ENCODE measurements at regions of chrX and their contacts with region 1.

Region 1: GRCh38 chrX:115679460-115679859 is 118.5 kb downstream of the PLS3 start:
- DNase-seq: no peak
- H3K4me3 ChIP-seq: no peak overlapping the region
- H3K27ac ChIP-seq: no peak overlapping the region
- H3K27me3 ChIP-seq: no peaks in the 10 kb centered on the region
- CTCF ChIP-seq: peak; percentile 55

Region 2: DNA sequence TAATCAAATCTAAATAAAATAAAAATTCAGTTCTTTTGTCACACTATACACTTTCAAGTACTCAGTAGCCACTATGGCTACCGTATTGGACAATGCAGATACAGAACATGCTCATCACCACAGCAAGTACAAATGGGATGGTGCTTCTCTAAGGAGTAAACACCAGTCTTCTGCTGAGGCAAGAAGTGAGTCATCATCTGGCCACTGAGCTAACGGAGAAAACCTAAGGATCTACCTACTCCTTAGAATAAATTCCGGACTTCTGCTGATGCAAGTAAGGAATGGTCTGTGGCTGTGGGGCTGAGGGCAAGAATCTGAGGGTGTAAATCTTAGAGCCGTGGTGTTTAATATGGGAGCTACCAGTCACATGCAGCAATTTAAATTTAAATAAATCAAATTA is 501.5 kb before region 1 on chrX:
- CTCF ChIA-PET with region 1: interaction called, 16 read pairs
- POLR2A ChIA-PET with region 1: no interaction called
- DNase-seq: peak; percentile 2
- H3K4me3 ChIP-seq: no peak overlapping the region
- H3K27ac ChIP-seq: no peak overlapping the region
- H3K27me3 ChIP-seq: no peaks in the 10 kb centered on the region
- CTCF ChIP-seq: no peak

Region 3: GRCh38 chrX:115330498-115331168 is 348.8 kb before region 1 on chrX:
- CTCF ChIA-PET with region 1: interaction called, 13 read pairs
- POLR2A ChIA-PET with region 1: no interaction called
- DNase-seq: no peak
- H3K4me3 ChIP-seq: peak overlapping the region; percentile 39
- H3K27ac ChIP-seq: no peak overlapping the region
- H3K27me3 ChIP-seq: no peaks in the 10 kb centered on the region
- CTCF ChIP-seq: peak; percentile 68

Region 4: DNA sequence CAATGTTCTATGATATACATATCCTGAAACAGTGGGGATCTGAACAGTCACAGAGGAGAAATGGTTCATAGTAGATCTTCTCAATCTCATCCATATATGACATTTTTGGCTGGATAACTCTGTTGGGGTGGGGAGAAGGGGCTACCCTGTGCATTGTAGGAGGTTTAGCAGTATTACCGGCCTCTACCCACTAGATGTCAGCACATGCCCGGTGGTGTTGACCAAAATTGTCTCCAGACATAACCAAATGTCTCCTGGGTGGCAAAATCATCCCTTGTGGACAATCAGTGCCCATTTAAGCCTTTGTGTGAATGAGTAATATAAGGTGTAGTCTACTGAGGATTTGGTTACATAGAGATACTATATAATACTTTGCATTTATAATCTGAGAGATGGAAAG is 28.5 kb before region 1 on chrX:
- CTCF ChIA-PET with region 1: interaction called, 14 read pairs
- POLR2A ChIA-PET with region 1: no interaction called
- DNase-seq: no peak
- H3K4me3 ChIP-seq: no peak overlapping the region
- H3K27ac ChIP-seq: no peak overlapping the region
- H3K27me3 ChIP-seq: no peaks in the 10 kb centered on the region
- CTCF ChIP-seq: peak; percentile 60

Region 5: GRCh38 chrX:115690511-115691216 is 11.2 kb after region 1 on chrX:
- CTCF ChIA-PET with region 1: interaction called, 30 read pairs
- POLR2A ChIA-PET with region 1: no interaction called
- DNase-seq: peak; percentile 51
- H3K4me3 ChIP-seq: no peak overlapping the region
- H3K27ac ChIP-seq: no peak overlapping the region
- H3K27me3 ChIP-seq: no peaks in the 10 kb centered on the region
- CTCF ChIP-seq: peak; percentile 69

Measured in AG04450 (cell line).